CD4-positive, alpha-beta T cell (primary cell): ENCODE measurements at regions of chr17 and their contacts with region 1.

Region 1: DNA sequence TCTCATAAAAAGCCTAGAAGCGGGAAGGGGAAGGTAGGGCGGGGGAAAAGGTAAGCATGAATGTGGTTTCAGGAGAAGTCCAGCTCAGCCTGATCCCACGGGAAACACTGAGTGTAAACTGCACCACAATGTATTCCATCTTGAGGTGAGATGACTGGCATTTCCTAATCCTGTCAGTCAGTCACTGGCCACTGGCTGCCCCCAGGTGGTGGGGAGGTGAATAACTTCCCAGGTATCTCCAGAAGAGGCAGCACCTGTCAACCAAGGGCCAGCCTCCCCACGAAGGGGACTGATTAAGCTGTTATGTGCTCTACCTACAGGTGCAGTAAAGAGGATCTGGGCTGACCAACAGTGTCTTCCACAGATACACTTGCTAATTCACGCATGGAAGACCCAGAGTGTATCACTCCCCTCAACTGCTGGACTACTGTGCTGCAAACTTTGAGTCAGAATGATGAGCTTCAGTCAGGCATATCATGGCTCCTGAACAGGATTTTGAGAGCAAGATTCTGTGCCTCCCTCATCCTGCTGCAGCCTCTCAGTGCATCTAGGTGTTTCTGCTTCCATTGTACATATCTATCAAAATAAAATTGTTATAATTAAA is 108.5 kb upstream of the CCL2 start:
- DNase-seq: peak; percentile 11 to 54 (median 28)
- ATAC-seq: peak; percentile 46
- H3K4me3 ChIP-seq: no peak overlapping the region
- H3K4me3 Mint-ChIP-seq: no peak overlapping the region
- H3K27ac ChIP-seq: no peak overlapping the region
- H3K27ac Mint-ChIP-seq: no peak overlapping the region
- H3K4me1 ChIP-seq: no peaks in the 10 kb centered on the region
- H3K4me1 Mint-ChIP-seq: no peaks in the 10 kb centered on the region
- H3K27me3 ChIP-seq: no peaks in the 10 kb centered on the region
- H3K27me3 Mint-ChIP-seq: peaks cover 15% of the 10 kb centered on the region
- CTCF ChIP-seq: peak; percentile 26

Region 2: DNA sequence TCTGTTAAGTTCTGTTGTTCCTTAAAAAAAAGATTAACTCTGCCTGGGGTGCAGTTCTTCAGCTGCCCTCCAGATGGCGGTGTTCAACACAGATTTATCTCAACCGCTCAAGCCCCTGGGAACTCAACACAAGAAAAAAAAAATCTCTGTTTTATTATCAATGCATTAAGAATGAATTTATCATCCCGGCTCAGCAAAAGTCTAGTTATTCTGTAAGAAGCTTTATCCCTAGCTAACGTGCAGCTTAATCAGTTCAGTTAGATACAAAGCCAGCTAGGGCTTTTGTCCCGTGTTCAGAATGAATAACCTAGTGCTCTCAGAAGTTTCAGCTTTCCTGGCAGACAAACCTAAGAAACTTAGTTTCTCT is 367.3 kb before region 1 on chr17:
- CTCF ChIA-PET with region 1: no interaction called
- POLR2A ChIA-PET with region 1: no interaction called
- intact Hi-C with region 1: loop called (anchors 2 kb)
- DNase-seq: peak in 9 of 14 experiments; percentile 2 to 60 (median 11)
- ATAC-seq: no peak
- H3K4me3 ChIP-seq: no peak overlapping the region
- H3K4me3 Mint-ChIP-seq: no peak overlapping the region
- H3K27ac ChIP-seq: no peak overlapping the region
- H3K27ac Mint-ChIP-seq: no peak overlapping the region
- H3K4me1 ChIP-seq: no peaks in the 10 kb centered on the region
- H3K4me1 Mint-ChIP-seq: no peaks in the 10 kb centered on the region
- H3K27me3 ChIP-seq: peaks cover 10 to 11% of the 10 kb centered on the region in 2 experiments
- H3K27me3 Mint-ChIP-seq: peaks cover 38% of the 10 kb centered on the region
- CTCF ChIP-seq: peak; percentile 91

Region 3: DNA sequence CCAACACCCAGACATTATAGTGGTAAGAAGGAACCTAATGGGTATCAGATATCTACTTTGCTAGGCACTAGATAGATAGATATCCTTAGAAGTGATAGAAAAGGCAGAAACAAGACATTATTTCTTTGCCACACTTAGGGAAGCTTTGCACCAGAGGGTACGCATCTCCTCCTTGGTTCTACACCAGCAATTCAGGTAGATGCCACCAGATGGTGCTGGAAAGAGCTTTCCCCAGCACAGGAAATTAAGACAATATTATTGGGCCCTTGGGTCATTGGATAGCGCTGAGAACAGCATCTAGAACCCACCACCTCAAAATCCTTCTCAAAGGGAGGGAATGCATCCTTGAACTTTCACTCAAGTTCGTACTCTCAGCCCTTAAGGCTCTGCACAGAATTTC is 65.3 kb before region 1 on chr17:
- CTCF ChIA-PET with region 1: no interaction called
- POLR2A ChIA-PET with region 1: no interaction called
- intact Hi-C with region 1: no loop called
- DNase-seq: no peak
- ATAC-seq: no peak
- H3K4me3 ChIP-seq: no peak overlapping the region
- H3K4me3 Mint-ChIP-seq: no peak overlapping the region
- H3K27ac ChIP-seq: no peak overlapping the region
- H3K27ac Mint-ChIP-seq: no peak overlapping the region
- H3K4me1 ChIP-seq: no peaks in the 10 kb centered on the region
- H3K4me1 Mint-ChIP-seq: no peaks in the 10 kb centered on the region
- H3K27me3 ChIP-seq: no peaks in the 10 kb centered on the region
- H3K27me3 Mint-ChIP-seq: peaks cover 27% of the 10 kb centered on the region
- CTCF ChIP-seq: no peak

Region 4: DNA sequence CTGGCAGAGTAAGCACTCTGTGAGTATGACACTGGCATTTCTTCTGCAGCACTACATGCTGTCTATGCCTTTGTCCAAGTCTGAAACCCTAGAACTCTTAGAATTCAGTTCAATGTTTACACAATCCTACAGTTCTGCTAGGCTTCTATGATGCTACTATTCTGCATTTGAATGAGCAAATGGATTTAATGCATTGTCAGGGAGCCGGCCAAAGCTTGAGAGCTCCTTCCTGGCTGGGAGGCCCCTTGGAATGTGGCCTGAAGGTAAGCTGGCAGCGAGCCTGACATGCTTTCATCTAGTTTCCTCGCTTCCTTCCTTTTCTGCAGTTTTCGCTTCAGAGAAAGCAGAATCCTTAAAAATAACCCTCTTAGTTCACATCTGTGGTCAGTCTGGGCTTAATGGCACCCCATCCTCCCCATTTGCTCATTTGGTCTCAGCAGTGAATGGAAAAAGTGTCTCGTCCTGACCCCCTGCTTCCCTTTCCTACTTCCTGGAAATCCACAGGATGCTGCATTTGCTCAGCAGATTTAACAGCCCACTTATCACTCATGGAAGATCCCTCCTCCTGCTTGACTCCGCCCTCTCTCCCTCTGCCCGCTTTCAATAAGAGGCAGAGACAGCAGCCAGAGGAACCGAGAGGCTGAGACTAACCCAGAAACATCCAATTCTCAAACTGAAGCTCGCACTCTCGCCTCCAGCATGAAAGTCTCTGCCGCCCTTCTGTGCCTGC is 108.3 kb after region 1 on chr17 and contains the start of gene CCL2:
- CTCF ChIA-PET with region 1: no interaction called
- POLR2A ChIA-PET with region 1: no interaction called
- intact Hi-C with region 1: no loop called
- DNase-seq: no peak
- ATAC-seq: no peak
- H3K4me3 ChIP-seq: no peak within 1 kb of the TSS
- H3K4me3 Mint-ChIP-seq: no peak within 1 kb of the TSS
- H3K27ac ChIP-seq: no peak within 1 kb of the TSS
- H3K27ac Mint-ChIP-seq: no peak within 1 kb of the TSS
- H3K4me1 ChIP-seq: no peaks in the 10 kb centered on the region
- H3K4me1 Mint-ChIP-seq: no peaks in the 10 kb centered on the region
- H3K27me3 ChIP-seq: peaks cover 13 to 39% of the 10 kb centered on the region in 2 experiments
- H3K27me3 Mint-ChIP-seq: peaks cover 59% of the 10 kb centered on the region
- CTCF ChIP-seq: no peak
- total RNA-seq, gene CCL2: not detected